OCI-LY7 (cell line): ENCODE measurements at regions of chr11 and their contacts with region 1.

Region 1: DNA sequence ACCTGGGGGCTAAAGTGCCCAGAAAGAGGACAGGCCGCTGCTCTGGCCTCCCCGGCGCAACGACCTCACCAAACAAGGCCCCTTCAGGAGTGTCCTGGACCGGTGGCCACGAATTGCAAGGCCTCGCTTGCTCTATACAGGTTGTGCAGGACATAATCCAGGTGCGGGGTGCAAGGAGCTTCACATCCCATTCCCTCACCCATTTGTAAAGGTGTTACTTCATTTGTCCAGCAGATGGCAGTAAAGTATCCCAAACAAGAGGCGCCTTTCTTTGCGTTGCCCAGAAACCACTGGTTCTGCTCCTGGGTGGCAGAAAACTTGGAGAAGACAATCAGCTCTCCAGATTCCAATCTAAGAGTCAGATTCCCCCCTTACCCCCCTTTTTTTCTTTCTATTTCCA is 35.9 kb upstream of the PRDM11 start:
- DNase-seq: peak; percentile 74
- H3K4me3 ChIP-seq: no peak overlapping the region
- H3K27ac ChIP-seq: no peak overlapping the region
- H3K4me1 ChIP-seq: no peaks in the 10 kb centered on the region
- CTCF ChIP-seq: peak; percentile 86

Region 2: DNA sequence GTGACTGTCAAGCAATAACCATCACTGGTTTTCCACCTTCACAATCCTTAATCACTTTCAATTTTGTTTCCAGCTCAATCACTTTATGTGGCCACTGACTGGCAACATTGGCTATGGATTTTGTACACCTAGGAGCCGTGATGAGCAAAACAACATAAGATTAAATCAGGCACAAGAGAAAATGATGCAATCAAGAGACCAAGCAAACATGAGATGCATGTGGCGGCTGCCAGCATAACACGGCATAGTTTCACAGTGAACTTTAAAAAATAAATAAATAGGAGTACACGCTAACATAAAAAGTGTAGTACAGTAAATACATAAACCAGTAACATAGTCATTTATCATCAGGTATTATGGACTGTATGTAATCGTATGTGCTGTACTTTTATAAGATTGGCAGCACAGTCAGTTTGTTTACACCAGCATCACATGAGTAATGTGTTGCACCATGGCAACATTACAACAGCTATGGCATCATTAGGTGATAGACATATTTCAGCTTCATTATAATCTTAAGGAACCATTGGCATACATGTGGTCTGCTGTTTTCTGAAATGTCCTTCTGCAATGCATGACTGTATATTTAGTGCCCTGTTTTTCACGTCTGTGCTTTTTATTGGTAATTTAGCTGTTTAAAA is 47.5 kb before region 1 on chr11:
- CTCF ChIA-PET with region 1: no interaction called
- POLR2A ChIA-PET with region 1: no interaction called
- intact Hi-C with region 1: no loop called
- DNase-seq: no peak
- H3K4me3 ChIP-seq: no peak overlapping the region
- H3K27ac ChIP-seq: no peak overlapping the region
- H3K4me1 ChIP-seq: peaks cover 20% of the 10 kb centered on the region
- CTCF ChIP-seq: no peak

Region 3: GRCh38 chr11:45163956-45164575 is 53.5 kb after region 1 on chr11:
- CTCF ChIA-PET with region 1: no interaction called
- POLR2A ChIA-PET with region 1: no interaction called
- intact Hi-C with region 1: loop called (anchors 5 kb)
- DNase-seq: no peak
- H3K4me3 ChIP-seq: no peak overlapping the region
- H3K27ac ChIP-seq: no peak overlapping the region
- H3K4me1 ChIP-seq: no peaks in the 10 kb centered on the region
- CTCF ChIP-seq: no peak

Region 4: DNA sequence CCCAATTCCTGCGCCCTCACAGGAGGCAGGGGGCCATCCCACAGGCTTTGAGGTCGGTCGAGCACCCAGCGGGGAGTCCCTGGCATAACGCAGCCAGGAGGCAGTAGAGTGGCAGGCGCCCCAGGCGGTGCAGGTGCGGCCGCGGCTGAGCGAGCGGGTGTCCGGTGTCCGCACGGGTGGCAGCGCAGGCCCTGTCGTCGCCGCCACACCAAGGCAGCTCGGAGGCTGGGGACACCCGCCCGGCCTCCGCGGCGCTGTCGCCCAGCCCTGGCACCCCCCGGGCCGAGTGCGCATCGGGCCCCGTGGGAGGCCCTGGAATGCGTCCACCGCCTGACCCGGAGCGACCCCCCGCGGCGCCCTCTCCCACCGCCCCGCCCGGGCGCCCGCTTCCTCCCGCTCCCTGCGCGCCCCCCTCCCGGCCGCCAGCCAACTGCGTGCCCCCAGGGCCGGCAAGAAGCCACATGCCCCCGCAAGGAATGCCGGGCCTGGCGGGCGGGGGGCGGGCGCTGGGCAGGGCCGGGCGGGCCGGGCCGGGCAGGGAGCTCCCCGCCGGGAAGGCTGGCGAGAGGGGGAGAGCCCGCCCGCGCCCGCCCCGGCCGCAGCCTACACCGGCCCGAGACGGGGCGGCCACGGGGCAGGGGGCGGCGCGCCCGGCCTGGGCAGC is 69.7 kb after region 1 on chr11:
- CTCF ChIA-PET with region 1: no interaction called
- POLR2A ChIA-PET with region 1: no interaction called
- intact Hi-C with region 1: no loop called
- DNase-seq: no peak
- H3K4me3 ChIP-seq: no peak overlapping the region
- H3K27ac ChIP-seq: no peak overlapping the region
- H3K4me1 ChIP-seq: peaks cover 4% of the 10 kb centered on the region
- CTCF ChIP-seq: no peak

Region 5: DNA sequence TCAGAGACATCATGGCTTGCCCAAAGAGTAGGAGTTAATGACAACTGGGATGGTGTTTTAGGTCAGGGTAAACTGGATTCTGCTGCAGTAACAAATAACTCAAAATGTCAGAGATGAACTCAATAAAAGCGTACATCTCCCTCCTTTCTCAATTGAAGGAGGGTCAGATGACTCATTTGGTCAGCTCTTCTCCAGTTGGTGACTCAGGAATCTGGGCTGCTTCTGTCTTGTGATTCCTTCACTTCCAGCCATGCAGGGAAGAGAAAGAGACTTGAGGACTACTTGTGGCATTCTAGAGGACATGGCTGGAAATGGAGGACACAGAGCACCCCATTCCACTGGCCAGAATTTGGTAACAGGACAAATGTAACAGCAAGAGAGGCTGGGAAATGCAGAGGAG is 178.8 kb after region 1 on chr11:
- CTCF ChIA-PET with region 1: no interaction called
- POLR2A ChIA-PET with region 1: no interaction called
- intact Hi-C with region 1: loop called (anchors 2 kb)
- DNase-seq: no peak
- H3K4me3 ChIP-seq: no peak overlapping the region
- H3K27ac ChIP-seq: no peak overlapping the region
- H3K4me1 ChIP-seq: no peaks in the 10 kb centered on the region
- CTCF ChIP-seq: no peak

Region 6: GRCh38 chr11:45332276-45332934 is 221.8 kb after region 1 on chr11:
- CTCF ChIA-PET with region 1: interaction called, 4 read pairs
- POLR2A ChIA-PET with region 1: no interaction called
- intact Hi-C with region 1: loop called (anchors 1 kb)
- DNase-seq: peak; percentile 56
- H3K4me3 ChIP-seq: no peak overlapping the region
- H3K27ac ChIP-seq: no peak overlapping the region
- H3K4me1 ChIP-seq: peaks cover 19% of the 10 kb centered on the region
- CTCF ChIP-seq: peak; percentile 80